Vagina (tissue), 2 donors: ENCODE measurements at regions of chr5 and their contacts with region 1.

Region 1: DNA sequence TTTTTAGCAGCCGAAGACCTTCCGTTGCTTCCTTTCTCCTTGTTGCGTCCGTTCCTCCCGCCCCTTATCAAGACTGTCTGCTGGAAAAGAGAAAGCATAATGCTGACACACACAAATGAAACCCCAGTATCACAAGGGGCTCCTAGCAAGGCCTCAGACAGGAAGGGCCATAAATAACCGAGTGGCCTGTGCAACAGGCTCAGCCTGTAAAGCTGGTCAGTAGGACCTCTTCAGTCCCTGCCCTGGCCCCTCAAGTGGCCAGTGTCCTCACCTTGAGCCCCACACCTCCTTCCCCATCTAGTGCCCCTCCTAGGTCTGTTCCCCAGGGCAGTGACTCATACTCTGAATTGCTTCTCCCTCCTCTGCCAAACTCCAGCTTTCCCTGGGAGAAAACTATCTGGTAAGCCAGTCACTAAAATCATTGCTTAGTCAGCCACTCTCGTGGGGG is 174.6 kb upstream of the IL12B start:
- DNase-seq: no peak
- H3K4me3 ChIP-seq: no peak overlapping the region
- H3K27ac ChIP-seq: peak overlapping the region; percentile 15
- H3K4me1 ChIP-seq: peaks cover 17% of the 10 kb centered on the region
- H3K27me3 ChIP-seq: no peaks in the 10 kb centered on the region
- CTCF ChIP-seq: no peak
- POLR2A ChIP-seq: no peak

Region 2: DNA sequence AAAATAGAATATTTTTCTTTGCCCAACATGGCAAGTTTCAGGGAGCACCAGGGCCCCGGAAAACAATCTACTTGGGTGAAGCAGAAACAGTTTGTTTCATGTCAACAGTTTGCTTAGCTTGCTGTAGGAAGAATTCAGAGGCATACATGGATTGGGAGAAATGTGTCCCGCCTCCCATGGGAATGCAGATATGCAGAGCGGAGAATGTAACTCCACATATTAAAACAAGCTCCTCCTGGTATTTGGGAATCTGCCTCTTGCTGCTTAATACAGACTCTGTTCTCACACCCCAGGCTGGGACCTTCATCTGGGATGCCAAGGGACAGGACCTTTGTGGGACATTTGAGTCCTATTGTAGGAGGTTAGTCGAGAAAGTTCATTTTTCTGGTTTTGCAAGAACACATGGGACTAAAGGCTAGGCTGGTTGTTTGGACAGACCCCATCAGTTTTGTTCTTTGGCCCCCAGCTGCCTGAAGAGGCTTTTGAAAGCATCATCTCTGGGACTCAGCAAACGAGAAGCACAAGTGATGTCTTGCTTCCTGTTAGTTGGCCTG is 190.9 kb after region 1 on chr5:
- intact Hi-C with region 1: loop called (anchors 5 kb)
- DNase-seq: no peak
- H3K4me3 ChIP-seq: no peak overlapping the region
- H3K27ac ChIP-seq: no peak overlapping the region
- H3K4me1 ChIP-seq: no peaks in the 10 kb centered on the region
- H3K27me3 ChIP-seq: no peaks in the 10 kb centered on the region
- CTCF ChIP-seq: no peak
- POLR2A ChIP-seq: no peak